Activated T-helper 2 cell treated with anti-CD3 and anti-CD28 coated beads, Interferon-gamma antibody, Interleukin-2, Interleukin-4, amounts not matched to agents 10 μg/mL and 5 μg/mL and 100 μg/mL, durations not matched to agents 14 hours and 24 hours and 36 hours (primary cell): ENCODE measurements at regions of chr2 and their contacts with region 1.

Region 1: DNA sequence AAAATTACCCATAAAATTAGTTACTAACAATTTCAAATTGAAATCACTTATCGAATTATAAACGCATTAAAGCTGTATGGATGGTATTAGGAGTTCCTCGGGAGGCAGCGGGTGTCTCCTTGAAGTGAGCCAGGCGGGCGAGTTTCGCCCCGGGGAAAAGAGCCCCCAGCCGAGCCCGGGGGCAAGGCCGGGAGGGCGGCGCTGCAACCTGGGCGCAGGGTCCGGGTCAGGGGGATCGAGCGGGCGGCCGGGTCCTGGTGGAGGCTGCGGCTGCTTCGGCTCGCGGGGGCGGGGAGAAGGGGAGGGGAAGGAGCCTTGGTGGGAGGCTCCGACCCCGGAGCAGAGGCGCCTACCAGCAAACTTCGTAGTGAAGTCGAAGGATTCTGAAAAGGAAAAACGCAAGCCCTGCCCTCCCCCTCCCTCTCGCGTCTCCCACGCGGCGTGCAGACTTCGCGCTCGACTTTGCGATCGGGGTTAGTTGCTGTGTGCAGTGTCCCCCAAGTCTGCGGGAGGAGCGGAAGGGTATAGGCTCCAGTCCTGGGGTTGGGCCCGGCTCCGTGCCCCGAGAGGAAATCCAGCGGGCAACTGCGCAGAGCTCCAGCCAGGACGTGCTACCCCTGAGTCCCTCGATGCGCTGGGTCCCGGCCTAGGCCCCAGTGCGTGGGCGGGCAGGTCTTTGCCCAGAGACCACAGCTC is 140.8 kb downstream of the MEIS1 start:
- DNase-seq: no peak
- H3K4me3 Mint-ChIP-seq: no peak overlapping the region
- H3K27ac Mint-ChIP-seq: no peak overlapping the region
- H3K4me1 Mint-ChIP-seq: peaks cover 4% of the 10 kb centered on the region
- H3K27me3 Mint-ChIP-seq: peaks cover 61% of the 10 kb centered on the region

Region 2: DNA sequence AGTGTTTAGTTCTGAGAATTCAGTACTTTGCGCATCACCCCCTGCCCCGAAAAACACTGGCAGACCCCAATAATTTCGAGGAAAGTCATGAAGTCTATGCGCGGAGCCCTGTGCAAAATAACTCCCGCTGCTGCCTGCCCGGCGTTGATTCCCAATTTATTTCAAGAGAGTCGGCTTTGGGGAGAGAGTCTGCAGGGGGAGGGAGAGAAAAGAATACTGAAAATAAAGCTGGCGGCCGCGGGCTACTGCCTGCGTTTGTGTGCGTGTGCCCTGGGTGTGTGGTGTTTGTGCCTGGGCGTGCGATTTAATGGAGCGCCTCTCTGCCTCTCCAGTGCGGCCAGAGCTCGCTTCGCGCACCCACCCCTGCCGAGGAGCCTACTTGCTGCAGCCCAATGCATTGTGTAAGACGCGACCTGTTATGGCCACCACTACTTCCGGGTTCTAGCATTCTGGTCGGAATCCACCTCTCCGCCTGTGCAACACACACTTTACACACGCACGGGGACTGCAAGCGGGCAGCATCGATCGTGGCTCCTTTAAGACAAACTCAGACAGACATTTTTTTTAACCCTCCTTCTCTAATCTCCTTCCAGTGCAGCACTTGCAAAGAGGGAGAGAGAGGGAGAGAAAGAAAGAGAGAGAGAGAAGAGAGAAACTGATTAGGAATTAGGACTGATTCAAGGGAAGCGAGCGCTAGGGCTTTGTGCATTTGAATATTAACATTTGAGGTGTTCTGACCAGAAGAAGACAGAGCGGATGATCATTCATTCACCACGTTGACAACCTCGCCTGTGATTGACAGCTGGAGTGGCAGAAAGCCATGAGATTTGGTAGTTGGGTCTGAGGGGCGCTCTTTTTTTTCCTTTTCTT is 140.9 kb before region 1 on chr2 and contains the start of gene MEIS1:
- intact Hi-C with region 1: loop called (anchors 2 kb)
- DNase-seq: peak; percentile 31
- H3K4me3 Mint-ChIP-seq: peak within 1 kb of the TSS; percentile 82
- H3K27ac Mint-ChIP-seq: no peak within 1 kb of the TSS
- H3K4me1 Mint-ChIP-seq: peaks cover 21% of the 10 kb centered on the region
- H3K27me3 Mint-ChIP-seq: peaks cover 91% of the 10 kb centered on the region
- total RNA-seq, gene MEIS1: not detected in 2 replicates